Aorta (tissue), 5 donors: ENCODE measurements at regions of chr10 and their contacts with region 1.

Region 1: DNA sequence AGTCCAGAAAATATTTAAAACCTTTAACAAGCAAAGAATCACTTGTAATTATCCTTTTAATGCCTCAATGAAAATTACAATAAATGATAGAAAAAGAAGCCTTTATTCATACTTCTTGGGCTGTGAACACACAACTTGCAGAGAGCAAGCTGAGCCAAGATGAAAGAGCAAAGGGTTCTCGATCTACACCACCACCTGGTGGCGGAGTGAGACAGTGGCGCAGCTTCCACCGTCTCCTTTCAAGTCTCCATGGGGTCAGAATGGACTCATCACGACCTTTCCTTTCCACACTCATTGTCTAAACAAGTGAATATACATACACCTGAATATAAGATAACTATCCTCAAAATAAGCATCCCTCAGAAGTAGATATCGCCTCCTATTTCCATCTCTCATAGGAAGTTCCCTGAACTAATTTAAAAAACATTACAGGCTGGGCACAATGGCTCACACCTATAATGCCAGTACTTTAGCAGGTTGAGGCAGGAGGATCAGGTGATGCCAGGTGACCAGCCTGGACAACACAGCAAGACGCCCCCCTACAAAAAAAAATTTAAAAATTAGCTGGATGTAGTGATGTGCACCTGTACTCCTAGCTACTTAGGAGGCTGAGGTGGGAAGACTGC is 40.7 kb downstream of the ATE1 start:
- DNase-seq: no peak
- ATAC-seq: no peak
- H3K4me3 ChIP-seq: no peak overlapping the region
- H3K27ac ChIP-seq: no peak overlapping the region
- H3K4me1 ChIP-seq: no peaks in the 10 kb centered on the region
- H3K27me3 ChIP-seq: no peaks in the 10 kb centered on the region

Region 2: DNA sequence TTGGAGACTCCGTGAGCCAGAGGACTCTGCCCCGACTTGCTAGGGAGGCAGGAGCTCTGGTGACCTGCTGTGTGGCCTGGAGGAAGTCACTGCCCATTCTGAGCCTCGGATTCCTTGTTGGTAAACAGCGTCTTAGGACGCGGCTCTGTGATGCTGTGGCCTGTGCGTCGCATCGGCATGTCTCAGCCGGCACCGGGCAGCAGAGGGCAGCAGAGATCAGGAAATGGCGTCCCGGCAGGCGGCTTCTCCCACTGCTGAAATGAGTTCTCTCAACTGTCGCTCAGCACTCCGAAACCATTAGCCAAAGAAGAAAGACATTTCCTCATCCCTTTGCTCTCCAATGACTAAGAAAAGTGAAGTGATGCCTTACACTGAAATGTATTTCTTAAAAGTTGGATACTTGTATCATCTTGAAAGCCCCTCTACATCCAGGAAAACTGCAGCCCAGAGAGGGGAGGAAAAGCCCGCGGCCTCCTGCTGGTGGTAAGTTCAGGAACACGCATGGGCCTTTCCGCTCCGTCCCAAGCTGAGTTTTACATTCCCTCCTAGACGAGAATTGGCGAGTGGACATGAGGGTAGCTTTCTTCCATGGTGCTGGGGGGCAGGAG is 944.2 kb before region 1 on chr10:
- intact Hi-C with region 1: loop called (anchors 5 kb)
- DNase-seq: peak; percentile 84 to 95
- ATAC-seq: peak; percentile 92
- H3K4me3 ChIP-seq: no peak overlapping the region
- H3K27ac ChIP-seq: no peak overlapping the region
- H3K4me1 ChIP-seq: no peaks in the 10 kb centered on the region
- H3K27me3 ChIP-seq: no peaks in the 10 kb centered on the region

Region 3: GRCh38 chr10:120948889-120949608 is 938.1 kb before region 1 on chr10:
- intact Hi-C with region 1: loop called (anchors 5 kb)
- DNase-seq: peak; percentile 77 to 91
- ATAC-seq: peak; percentile 96
- H3K4me3 ChIP-seq: peak overlapping the region; percentile 3 to 12
- H3K27ac ChIP-seq: no peak overlapping the region
- H3K4me1 ChIP-seq: no peaks in the 10 kb centered on the region
- H3K27me3 ChIP-seq: no peaks in the 10 kb centered on the region

Region 4: DNA sequence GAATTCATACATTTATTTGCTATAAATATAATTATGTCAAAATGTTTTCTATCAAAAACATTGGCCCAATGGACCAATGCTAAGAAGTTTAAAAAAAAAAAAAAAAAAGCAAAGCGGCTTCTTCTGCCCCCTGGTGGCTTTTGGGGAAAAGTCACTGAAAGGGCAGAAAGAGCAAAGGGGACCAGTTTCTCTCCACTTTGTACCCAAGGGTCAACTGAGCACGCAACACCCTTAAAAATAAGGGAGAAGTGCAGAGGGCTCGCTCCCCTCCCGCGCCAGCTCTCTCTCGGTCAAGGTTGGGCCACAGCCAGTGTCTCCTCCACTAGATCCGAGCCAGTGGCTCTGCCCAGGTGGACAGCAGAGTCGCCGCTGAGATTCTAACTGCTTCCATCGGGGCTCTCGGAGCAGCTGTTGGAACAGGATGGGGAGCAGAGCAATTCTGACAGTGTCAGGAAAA is 152.5 kb before region 1 on chr10:
- intact Hi-C with region 1: loop called in 1 of 2 experiments (anchors 10 kb)
- DNase-seq: no peak
- ATAC-seq: peak; percentile 40
- H3K4me3 ChIP-seq: no peak overlapping the region
- H3K27ac ChIP-seq: no peak overlapping the region
- H3K4me1 ChIP-seq: no peaks in the 10 kb centered on the region
- H3K27me3 ChIP-seq: no peaks in the 10 kb centered on the region

Region 5: GRCh38 chr10:121823993-121824463 is 63.1 kb before region 1 on chr10:
- intact Hi-C with region 1: loop called in 1 of 2 experiments (anchors 10 kb)
- DNase-seq: no peak
- ATAC-seq: no peak
- H3K4me3 ChIP-seq: no peak overlapping the region
- H3K27ac ChIP-seq: no peak overlapping the region
- H3K4me1 ChIP-seq: no peaks in the 10 kb centered on the region
- H3K27me3 ChIP-seq: no peaks in the 10 kb centered on the region

Region 6: GRCh38 chr10:121838931-121839330 is 48.2 kb before region 1 on chr10:
- intact Hi-C with region 1: no loop called
- DNase-seq: no peak
- ATAC-seq: no peak
- H3K4me3 ChIP-seq: no peak overlapping the region
- H3K27ac ChIP-seq: no peak overlapping the region
- H3K4me1 ChIP-seq: no peaks in the 10 kb centered on the region
- H3K27me3 ChIP-seq: no peaks in the 10 kb centered on the region